ENCODE measurements at regions of chr5 and their contacts with region 1.

Region 1: GRCh38 chr5:174148721-174149120 is 103.2 kb downstream of the NSG2 start:
- DNase-seq: no peak
- H3K4me3 ChIP-seq: no peak overlapping the region
- H3K27ac ChIP-seq: no peak overlapping the region
- H3K4me1 ChIP-seq: no peaks in the 10 kb centered on the region
- H3K27me3 ChIP-seq: peaks cover 36% of the 10 kb centered on the region
- CTCF ChIP-seq: no peak

Region 2: GRCh38 chr5:174119468-174119881 is 29.2 kb before region 1 on chr5:
- CTCF ChIA-PET with region 1: no interaction called
- POLR2A ChIA-PET with region 1: no interaction called
- intact Hi-C with region 1: loop called (anchors 1 kb)
- DNase-seq: no peak
- H3K4me3 ChIP-seq: no peak overlapping the region
- H3K27ac ChIP-seq: no peak overlapping the region
- H3K4me1 ChIP-seq: no peaks in the 10 kb centered on the region
- H3K27me3 ChIP-seq: peaks cover 89% of the 10 kb centered on the region
- CTCF ChIP-seq: no peak

Measured in PC-9 (cell line).